Activated CD4-positive, alpha-beta T cell treated with anti-CD3 and anti-CD28 coated beads for 36 hours (primary cell): ENCODE measurements at regions of chr1 and their contacts with region 1.

Region 1: GRCh38 chr1:214328770-214329469 is 48.0 kb downstream of the SMYD2 start:
- DNase-seq: peak; percentile 88
- ATAC-seq: peak; percentile 93
- H3K4me3 Mint-ChIP-seq: no peak overlapping the region
- H3K27ac Mint-ChIP-seq: peak overlapping the region; percentile 23
- H3K4me1 Mint-ChIP-seq: peaks cover 3% of the 10 kb centered on the region
- H3K27me3 Mint-ChIP-seq: no peaks in the 10 kb centered on the region

Region 2: DNA sequence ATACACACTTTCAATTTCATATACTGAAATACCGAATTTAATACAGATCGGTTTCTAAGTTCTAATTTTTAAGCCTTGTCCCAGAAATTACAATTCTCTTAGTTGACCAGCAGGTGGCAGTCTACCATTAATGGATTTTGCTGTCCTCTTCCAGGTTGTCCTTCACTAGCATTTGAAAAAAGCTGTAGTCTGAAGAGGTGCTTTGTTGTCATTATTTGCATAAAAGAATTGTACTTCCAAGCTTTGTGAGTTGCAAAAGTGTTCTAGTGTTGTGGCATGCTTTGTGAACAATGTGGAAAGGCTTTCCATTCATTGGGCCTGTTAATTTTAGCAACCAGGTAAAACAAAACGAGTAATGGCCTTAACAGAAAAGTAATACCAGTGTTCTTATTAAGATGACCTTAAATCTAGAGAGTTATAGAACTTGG is 1084.2 kb before region 1 on chr1:
- CTCF ChIA-PET with region 1: no interaction called
- POLR2A ChIA-PET with region 1: no interaction called
- intact Hi-C with region 1: loop called in 1 of 2 experiments (anchors 5 kb)
- DNase-seq: peak; percentile 36
- ATAC-seq: no peak
- H3K4me3 Mint-ChIP-seq: no peak overlapping the region
- H3K27ac Mint-ChIP-seq: no peak overlapping the region
- H3K4me1 Mint-ChIP-seq: no peaks in the 10 kb centered on the region
- H3K27me3 Mint-ChIP-seq: no peaks in the 10 kb centered on the region

Region 3: GRCh38 chr1:213783893-213784292 is 545.0 kb before region 1 on chr1:
- CTCF ChIA-PET with region 1: no interaction called
- POLR2A ChIA-PET with region 1: no interaction called
- intact Hi-C with region 1: no loop called
- DNase-seq: no peak
- ATAC-seq: no peak
- H3K4me3 Mint-ChIP-seq: no peak overlapping the region
- H3K27ac Mint-ChIP-seq: no peak overlapping the region
- H3K4me1 Mint-ChIP-seq: peaks cover 15% of the 10 kb centered on the region
- H3K27me3 Mint-ChIP-seq: peaks cover 17% of the 10 kb centered on the region

Region 4: DNA sequence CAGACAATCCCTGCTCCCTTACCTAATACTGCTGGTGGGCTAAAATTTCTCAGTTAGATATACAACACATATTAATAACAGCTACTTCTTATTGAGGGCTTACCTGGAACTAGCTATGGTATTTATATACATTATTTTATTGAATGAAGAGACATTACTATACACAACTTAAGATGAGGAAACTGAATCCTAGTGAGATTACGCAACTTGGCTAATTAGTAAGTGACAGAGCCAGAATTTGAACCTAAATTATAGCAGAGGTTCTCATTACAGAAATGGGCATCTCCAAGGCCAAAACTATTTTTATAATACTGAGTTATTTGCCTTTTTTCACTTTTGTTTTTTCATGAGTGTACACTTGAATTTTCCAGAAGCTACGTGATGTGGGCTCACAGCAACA is 92.4 kb before region 1 on chr1:
- CTCF ChIA-PET with region 1: interaction called, 11 read pairs
- POLR2A ChIA-PET with region 1: no interaction called
- intact Hi-C with region 1: no loop called
- DNase-seq: no peak
- ATAC-seq: no peak
- H3K4me3 Mint-ChIP-seq: no peak overlapping the region
- H3K27ac Mint-ChIP-seq: no peak overlapping the region
- H3K4me1 Mint-ChIP-seq: no peaks in the 10 kb centered on the region
- H3K27me3 Mint-ChIP-seq: peaks cover 15% of the 10 kb centered on the region

Region 5: DNA sequence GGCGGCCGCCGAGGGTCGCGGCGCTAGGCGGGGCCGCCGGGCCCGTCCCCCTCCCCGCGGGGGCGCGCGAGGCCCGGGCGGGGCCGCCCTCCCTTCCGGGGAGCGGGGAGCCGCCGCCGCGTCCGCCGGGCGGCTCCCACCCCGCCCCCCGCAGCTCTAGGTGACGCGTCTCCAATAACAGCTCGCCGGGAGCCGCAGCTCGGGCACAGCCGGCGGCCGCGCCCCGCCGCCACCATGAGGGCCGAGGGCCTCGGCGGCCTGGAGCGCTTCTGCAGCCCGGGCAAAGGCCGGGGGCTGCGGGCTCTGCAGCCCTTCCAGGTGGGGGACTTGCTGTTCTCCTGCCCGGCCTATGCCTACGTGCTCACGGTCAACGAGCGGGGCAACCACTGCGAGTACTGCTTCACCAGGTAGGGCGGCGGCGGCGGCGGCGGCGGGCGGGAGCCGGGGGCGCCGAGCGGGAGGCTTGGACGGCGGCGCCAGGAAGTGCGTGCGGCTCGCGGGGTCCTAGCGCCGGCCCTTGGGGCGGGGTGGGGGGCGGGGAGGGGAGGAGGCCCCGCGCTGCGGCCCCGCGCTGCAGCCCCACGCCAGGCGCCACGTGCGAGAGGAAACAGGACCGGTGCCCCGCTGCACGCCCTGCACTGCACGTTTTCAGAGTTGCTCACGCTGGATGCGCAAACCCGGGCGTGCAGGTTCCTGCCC is 47.8 kb before region 1 on chr1 and contains the start of gene SMYD2:
- CTCF ChIA-PET with region 1: interaction called, 13 read pairs
- POLR2A ChIA-PET with region 1: no interaction called
- intact Hi-C with region 1: no loop called
- DNase-seq: peak; percentile 82
- ATAC-seq: peak; percentile 74
- H3K4me3 Mint-ChIP-seq: peak within 1 kb of the TSS; percentile 92
- H3K27ac Mint-ChIP-seq: peak within 1 kb of the TSS; percentile 89
- H3K4me1 Mint-ChIP-seq: peaks cover 37% of the 10 kb centered on the region
- H3K27me3 Mint-ChIP-seq: no peaks in the 10 kb centered on the region
- total RNA-seq, gene SMYD2: 38.2 to 40.1 TPM

Region 6: DNA sequence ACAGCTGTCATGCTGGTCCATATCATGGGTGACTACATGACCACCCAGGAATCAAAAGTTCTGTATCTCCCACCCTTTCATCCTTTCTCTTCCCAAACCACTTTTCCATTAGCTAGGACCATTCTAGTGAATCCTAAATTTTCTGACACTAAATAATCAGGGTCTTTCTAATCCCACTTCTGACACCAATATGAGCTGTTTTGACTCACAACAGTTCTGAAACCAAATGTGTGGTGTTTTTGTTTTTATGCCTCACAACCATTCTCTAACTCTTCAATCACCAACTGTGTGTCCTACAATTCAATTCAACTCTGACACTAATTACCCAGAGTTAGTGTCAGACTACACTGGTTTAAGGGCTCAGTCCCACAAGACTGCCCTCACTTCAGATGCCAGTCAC is 16.0 kb after region 1 on chr1:
- CTCF ChIA-PET with region 1: interaction called, 23 read pairs
- POLR2A ChIA-PET with region 1: no interaction called
- intact Hi-C with region 1: no loop called
- DNase-seq: no peak
- ATAC-seq: no peak
- H3K4me3 Mint-ChIP-seq: no peak overlapping the region
- H3K27ac Mint-ChIP-seq: no peak overlapping the region
- H3K4me1 Mint-ChIP-seq: no peaks in the 10 kb centered on the region
- H3K27me3 Mint-ChIP-seq: no peaks in the 10 kb centered on the region

Region 7: DNA sequence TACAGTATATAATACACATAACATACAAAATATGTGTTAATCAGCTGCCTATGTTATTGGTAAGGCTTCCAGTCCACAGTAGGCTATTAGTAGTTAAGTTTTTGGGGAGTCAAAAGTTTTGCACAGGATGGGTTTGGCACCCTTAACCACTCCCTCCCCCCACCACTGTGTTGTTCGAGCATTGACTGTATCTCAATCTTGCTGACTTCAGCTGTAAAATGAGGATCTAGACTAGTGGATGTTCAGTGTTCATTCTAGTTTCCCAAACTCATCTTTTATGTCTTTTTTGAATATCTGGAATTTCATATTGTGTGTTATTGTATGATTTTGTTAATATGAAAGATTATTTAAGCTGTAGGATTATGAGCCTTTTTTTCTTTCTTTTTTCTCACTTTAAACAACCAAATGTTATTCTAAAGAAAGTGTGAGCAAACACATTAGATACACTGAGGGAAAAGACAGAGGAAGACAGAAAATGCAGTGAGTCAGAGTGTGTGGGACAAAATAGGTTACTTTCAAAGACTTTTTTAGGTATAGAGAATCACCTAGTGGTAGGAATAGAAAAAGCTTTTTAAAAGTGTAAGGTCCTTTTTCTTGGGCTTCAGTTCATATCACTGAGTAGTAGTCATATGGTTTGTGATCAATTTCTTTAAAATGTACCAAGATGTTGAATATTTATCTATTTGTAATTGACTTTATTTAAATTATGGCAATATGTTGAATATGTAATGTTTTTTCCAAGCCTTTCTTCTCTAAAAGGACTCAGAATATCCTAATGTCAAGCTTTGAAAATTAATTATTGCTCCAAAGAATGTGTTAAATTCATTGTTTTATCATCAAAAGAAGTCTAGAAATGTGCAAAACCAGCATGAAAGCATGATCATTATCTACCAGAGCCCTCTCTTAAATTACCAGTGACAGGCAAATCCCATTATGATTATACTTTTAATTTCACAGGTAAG is 256.2 kb after region 1 on chr1:
- CTCF ChIA-PET with region 1: interaction called, 67 read pairs
- POLR2A ChIA-PET with region 1: no interaction called
- intact Hi-C with region 1: loop called (anchors 1 kb)
- DNase-seq: no peak
- ATAC-seq: peak; percentile 89
- H3K4me3 Mint-ChIP-seq: no peak overlapping the region
- H3K27ac Mint-ChIP-seq: no peak overlapping the region
- H3K4me1 Mint-ChIP-seq: peaks cover 6% of the 10 kb centered on the region
- H3K27me3 Mint-ChIP-seq: peaks cover 3% of the 10 kb centered on the region

Region 8: GRCh38 chr1:214989341-214989740 is 660.4 kb after region 1 on chr1:
- CTCF ChIA-PET with region 1: no interaction called
- POLR2A ChIA-PET with region 1: no interaction called
- intact Hi-C with region 1: no loop called
- DNase-seq: no peak
- ATAC-seq: no peak
- H3K4me3 Mint-ChIP-seq: no peak overlapping the region
- H3K27ac Mint-ChIP-seq: no peak overlapping the region
- H3K4me1 Mint-ChIP-seq: no peaks in the 10 kb centered on the region
- H3K27me3 Mint-ChIP-seq: no peaks in the 10 kb centered on the region